ENCODE measurements at regions of chr20 and their contacts with region 1.

Region 1: DNA sequence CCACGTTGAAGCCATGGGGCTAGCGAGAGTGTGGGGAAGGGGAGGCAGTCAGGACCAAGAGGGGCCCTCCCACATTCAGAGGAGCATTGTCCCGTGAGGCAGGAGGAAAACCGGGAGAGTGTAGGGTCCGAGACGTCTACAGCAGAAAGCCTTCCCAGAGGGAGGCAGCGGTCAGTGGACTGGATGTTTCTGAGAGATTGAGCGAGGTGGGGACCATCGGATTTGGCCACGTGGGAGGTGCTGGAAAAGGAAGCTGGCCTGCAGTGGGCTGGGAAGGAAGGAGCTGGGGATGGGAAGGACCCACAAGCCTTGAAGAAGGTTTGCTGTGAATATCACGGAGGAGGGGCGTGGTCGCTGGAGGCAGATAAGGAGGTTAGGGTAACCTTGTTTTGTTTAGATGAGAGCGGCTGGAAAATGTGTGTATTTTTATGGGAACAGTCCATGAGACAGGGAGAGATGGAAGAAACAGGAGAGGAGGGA is 119.0 kb upstream of the RNF24 start:
- DNase-seq: no peak
- ATAC-seq: no peak
- H3K4me3 Mint-ChIP-seq: no peak overlapping the region
- H3K27ac Mint-ChIP-seq: peak overlapping the region; percentile 27
- H3K4me1 Mint-ChIP-seq: peaks cover 31% of the 10 kb centered on the region
- H3K27me3 Mint-ChIP-seq: peaks cover 4% of the 10 kb centered on the region

Region 2: DNA sequence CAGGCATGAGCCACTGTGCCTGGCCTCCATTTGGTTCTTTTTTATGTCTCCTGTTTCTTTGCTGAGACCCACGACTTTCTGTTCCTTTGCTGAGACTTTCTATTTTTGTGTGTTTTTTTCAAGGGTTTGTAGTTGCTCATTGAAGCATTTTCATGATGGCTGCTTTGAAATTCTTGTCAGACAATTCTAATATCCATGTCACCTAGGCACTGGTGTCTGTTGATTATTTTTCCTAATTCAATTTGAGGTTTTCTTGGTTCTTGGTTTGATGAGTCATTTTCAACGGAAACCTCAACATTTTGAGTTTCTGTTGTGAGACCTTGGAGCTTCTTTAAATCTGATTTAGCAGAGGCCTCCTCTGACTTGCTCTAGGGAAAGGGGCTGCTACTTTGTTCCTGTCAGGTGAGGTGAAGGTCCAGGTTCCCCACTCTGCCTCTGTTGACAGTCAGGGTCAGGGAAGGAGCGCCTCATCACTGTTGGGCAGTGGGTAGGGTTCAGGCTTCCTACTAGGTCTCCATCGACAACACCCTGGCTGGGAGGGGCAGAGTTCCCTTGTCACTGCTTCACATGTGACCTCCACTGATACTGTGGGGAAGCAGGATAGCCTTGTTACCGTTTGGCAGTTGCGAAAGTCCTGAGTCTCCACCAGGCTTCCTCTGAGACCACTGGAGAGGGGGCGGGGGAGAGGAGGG is 51.8 kb before region 1 on chr20:
- CTCF ChIA-PET with region 1: no interaction called
- POLR2A ChIA-PET with region 1: no interaction called
- intact Hi-C with region 1: no loop called
- DNase-seq: peak; percentile 69
- ATAC-seq: peak; percentile 78
- H3K4me3 Mint-ChIP-seq: peak overlapping the region; percentile 9
- H3K27ac Mint-ChIP-seq: peak overlapping the region; percentile 87
- H3K4me1 Mint-ChIP-seq: peaks cover 41% of the 10 kb centered on the region
- H3K27me3 Mint-ChIP-seq: peaks cover 5% of the 10 kb centered on the region

Region 3: GRCh38 chr20:4152006-4152695 is 17.8 kb after region 1 on chr20:
- CTCF ChIA-PET with region 1: no interaction called
- POLR2A ChIA-PET with region 1: no interaction called
- intact Hi-C with region 1: no loop called
- DNase-seq: no peak
- ATAC-seq: no peak
- H3K4me3 Mint-ChIP-seq: no peak overlapping the region
- H3K27ac Mint-ChIP-seq: no peak overlapping the region
- H3K4me1 Mint-ChIP-seq: peaks cover 9% of the 10 kb centered on the region
- H3K27me3 Mint-ChIP-seq: peaks cover 36% of the 10 kb centered on the region

Region 4: GRCh38 chr20:4217349-4217773 is 83.0 kb after region 1 on chr20:
- CTCF ChIA-PET with region 1: no interaction called
- POLR2A ChIA-PET with region 1: interaction called, 10 read pairs
- intact Hi-C with region 1: no loop called
- DNase-seq: no peak
- ATAC-seq: no peak
- H3K4me3 Mint-ChIP-seq: no peak overlapping the region
- H3K27ac Mint-ChIP-seq: no peak overlapping the region
- H3K4me1 Mint-ChIP-seq: peaks cover 9% of the 10 kb centered on the region
- H3K27me3 Mint-ChIP-seq: peaks cover 38% of the 10 kb centered on the region

Region 5: GRCh38 chr20:4449957-4450715 is 315.7 kb after region 1 on chr20:
- CTCF ChIA-PET with region 1: no interaction called
- POLR2A ChIA-PET with region 1: no interaction called
- intact Hi-C with region 1: no loop called
- DNase-seq: no peak
- ATAC-seq: no peak
- H3K4me3 Mint-ChIP-seq: no peak overlapping the region
- H3K27ac Mint-ChIP-seq: no peak overlapping the region
- H3K4me1 Mint-ChIP-seq: no peaks in the 10 kb centered on the region
- H3K27me3 Mint-ChIP-seq: peaks cover 7% of the 10 kb centered on the region

Measured in activated CD4-positive, alpha-beta T cell treated with anti-CD3 and anti-CD28 coated beads for 36 hours (primary cell).